ENCODE measurements at regions of chr17 and their contacts with region 1.

Region 1: GRCh38 chr17:67441052-67441927 is 64.2 kb downstream of the PITPNC1 start:
- DNase-seq: peak in 1 of 2 experiments; percentile 24
- H3K4me3 ChIP-seq: no peak overlapping the region
- H3K27ac ChIP-seq: no peak overlapping the region
- H3K4me1 ChIP-seq: no peaks in the 10 kb centered on the region
- H3K27me3 ChIP-seq: no peaks in the 10 kb centered on the region
- CTCF ChIP-seq: no peak

Region 2: GRCh38 chr17:67227488-67227887 is 213.8 kb before region 1 on chr17:
- CTCF ChIA-PET with region 1: no interaction called
- POLR2A ChIA-PET with region 1: interaction called, 15 read pairs
- intact Hi-C with region 1: no loop called
- DNase-seq: no peak
- H3K4me3 ChIP-seq: no peak overlapping the region
- H3K27ac ChIP-seq: no peak overlapping the region
- H3K4me1 ChIP-seq: no peaks in the 10 kb centered on the region
- H3K27me3 ChIP-seq: no peaks in the 10 kb centered on the region
- CTCF ChIP-seq: no peak

Region 3: DNA sequence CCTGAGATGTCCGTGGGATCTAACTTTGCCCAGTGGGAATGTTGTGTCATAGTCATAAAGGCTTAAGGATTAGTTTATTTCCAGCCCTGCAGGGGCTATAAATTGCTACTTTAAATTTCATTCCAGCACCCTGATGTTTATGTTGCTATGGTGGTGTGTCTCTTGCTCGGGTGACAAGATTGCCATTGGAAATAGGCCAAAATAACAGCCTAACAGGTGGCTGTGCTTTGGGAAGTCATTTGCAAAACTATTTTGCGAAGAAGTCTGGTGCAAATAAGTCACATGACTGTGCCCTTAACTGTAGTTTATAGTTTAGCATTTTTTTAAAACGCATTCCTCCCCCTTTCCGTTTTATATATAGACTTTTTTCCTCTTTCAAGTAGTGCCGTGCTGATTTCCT is 41.1 kb before region 1 on chr17:
- CTCF ChIA-PET with region 1: no interaction called
- POLR2A ChIA-PET with region 1: interaction called, 13 read pairs
- intact Hi-C with region 1: no loop called
- DNase-seq: no peak
- H3K4me3 ChIP-seq: no peak overlapping the region
- H3K27ac ChIP-seq: no peak overlapping the region
- H3K4me1 ChIP-seq: no peaks in the 10 kb centered on the region
- H3K27me3 ChIP-seq: no peaks in the 10 kb centered on the region
- CTCF ChIP-seq: no peak

Region 4: DNA sequence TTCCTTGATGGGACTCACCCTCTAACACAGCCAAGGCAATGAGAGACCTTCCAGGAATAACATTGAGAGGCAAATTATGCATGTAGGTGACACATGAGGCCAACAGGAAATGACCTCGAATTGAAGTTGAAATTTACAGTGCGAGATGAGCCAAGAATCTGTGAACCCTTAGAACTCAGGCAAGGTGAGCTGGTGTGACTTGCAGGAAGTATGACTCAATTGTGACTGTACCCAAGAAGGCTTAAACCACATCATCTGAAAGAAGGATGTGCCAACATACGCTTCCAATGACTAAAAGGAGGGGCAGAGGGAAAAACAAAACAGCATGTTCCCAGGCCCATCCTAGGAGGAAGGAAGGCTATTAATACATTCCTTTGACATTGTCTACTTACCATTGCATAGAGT is 19.4 kb before region 1 on chr17:
- CTCF ChIA-PET with region 1: no interaction called
- POLR2A ChIA-PET with region 1: interaction called, 4 read pairs
- intact Hi-C with region 1: loop called (anchors 1 kb)
- DNase-seq: peak; percentile 70 to 100
- H3K4me3 ChIP-seq: no peak overlapping the region
- H3K27ac ChIP-seq: peak overlapping the region; percentile 93
- H3K4me1 ChIP-seq: peaks cover 22% of the 10 kb centered on the region
- H3K27me3 ChIP-seq: no peaks in the 10 kb centered on the region
- CTCF ChIP-seq: no peak

Region 5: GRCh38 chr17:67569873-67570272 is 128.6 kb after region 1 on chr17:
- CTCF ChIA-PET with region 1: no interaction called
- POLR2A ChIA-PET with region 1: no interaction called
- intact Hi-C with region 1: no loop called
- DNase-seq: no peak
- H3K4me3 ChIP-seq: no peak overlapping the region
- H3K27ac ChIP-seq: no peak overlapping the region
- H3K4me1 ChIP-seq: no peaks in the 10 kb centered on the region
- H3K27me3 ChIP-seq: no peaks in the 10 kb centered on the region
- CTCF ChIP-seq: no peak

Region 6: DNA sequence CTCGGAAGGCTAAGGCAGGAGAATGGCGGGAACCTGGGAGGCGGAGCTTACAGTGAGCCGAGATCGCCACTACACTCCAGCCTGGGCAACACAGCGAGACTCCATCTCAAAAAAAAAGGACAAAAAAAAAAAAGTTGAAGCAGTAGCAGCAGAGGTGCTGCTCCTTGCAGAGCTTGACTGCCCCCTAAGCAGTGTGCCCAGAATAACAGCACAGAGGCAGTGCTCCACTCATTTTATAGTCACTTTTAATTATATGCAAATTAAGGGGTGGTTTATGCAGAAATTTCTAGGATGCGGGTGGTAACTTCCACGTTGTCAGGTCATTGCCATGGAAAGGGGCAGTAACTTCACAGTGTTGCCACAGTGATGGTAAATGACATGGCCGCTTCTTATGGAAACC is 222.2 kb after region 1 on chr17:
- CTCF ChIA-PET with region 1: no interaction called
- POLR2A ChIA-PET with region 1: no interaction called
- intact Hi-C with region 1: no loop called
- DNase-seq: no peak
- H3K4me3 ChIP-seq: no peak overlapping the region
- H3K27ac ChIP-seq: no peak overlapping the region
- H3K4me1 ChIP-seq: no peaks in the 10 kb centered on the region
- H3K27me3 ChIP-seq: no peaks in the 10 kb centered on the region
- CTCF ChIP-seq: no peak

Region 7: DNA sequence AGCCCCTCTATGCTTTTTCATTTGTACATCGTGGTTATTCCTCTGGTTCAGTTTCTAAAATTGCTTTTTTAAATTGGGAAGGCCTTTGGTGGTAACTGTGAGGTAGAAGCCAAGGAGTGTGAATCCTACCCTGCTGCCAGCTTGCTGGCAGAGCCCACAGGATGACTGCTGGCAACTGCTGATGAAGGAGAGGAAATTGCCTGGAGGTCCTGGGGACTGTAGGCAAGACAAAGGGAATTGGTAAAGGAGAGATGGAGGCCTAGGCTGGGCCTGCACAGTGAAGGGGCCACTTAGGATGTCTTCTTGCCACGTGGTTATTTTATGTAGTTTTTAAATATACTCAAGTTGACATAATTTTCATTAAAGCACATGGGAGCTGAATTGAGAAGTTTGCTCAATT is 539.2 kb after region 1 on chr17:
- CTCF ChIA-PET with region 1: no interaction called
- POLR2A ChIA-PET with region 1: interaction called, 15 read pairs
- intact Hi-C with region 1: no loop called
- DNase-seq: no peak
- H3K4me3 ChIP-seq: no peak overlapping the region
- H3K27ac ChIP-seq: no peak overlapping the region
- H3K4me1 ChIP-seq: no peaks in the 10 kb centered on the region
- H3K27me3 ChIP-seq: no peaks in the 10 kb centered on the region
- CTCF ChIP-seq: no peak

Measured in PC-9 (cell line).